ENCODE measurements at regions of chr13 and their contacts with region 1.

Region 1: DNA sequence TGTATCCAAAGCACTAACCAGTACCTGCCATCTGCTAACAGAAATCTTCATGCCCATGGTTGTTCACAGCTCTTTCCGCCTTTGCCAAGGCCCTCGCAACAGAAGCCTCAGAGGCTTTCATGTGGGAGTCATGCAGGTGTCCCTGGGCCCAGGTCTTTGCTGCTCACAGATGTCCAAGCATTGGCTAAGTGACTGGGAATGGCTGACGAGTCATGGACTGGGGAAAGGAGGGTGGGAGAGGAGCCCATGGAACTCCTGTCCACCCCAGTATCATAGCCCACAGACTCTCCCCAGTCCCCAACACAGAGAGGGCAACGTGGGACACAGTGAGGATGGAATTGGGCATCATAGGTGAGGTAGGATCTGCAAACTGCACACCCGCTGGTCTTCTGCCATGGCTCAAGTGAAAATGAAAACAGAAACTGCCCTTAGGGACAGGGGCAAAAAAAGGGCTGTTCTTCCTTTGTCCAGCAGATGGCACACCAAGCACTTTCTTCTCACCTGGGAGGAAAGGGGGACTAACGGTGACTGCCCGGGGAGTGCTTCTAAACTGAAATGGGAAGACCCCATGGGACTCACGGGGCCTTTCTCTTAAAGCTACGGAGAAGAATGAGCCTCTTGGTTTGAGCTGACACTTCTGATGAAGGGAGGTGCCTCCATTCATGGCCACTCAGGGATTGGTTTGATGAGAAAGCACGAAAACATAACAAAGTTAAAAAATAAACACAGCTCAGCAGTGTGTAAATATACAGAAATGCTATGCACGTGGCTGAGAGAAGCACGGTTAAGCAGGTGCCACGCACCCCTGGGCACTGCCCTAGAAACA is 11.1 kb upstream of the DHRS12 start:
- DNase-seq: peak; percentile 65 to 66
- H3K4me3 ChIP-seq: peak overlapping the region in 1 of 3 donors; percentile 5
- H3K27ac ChIP-seq: no peak overlapping the region
- H3K4me1 ChIP-seq: peaks cover 7 to 12% of the 10 kb centered on the region in 2 donors
- H3K27me3 ChIP-seq: no peaks in the 10 kb centered on the region
- CTCF ChIP-seq: peak; percentile 58 to 81 (median 71)
- POLR2A ChIP-seq: no peak

Region 2: GRCh38 chr13:52011632-52012511 is 196.8 kb after region 1 on chr13 and contains the start of gene ALG11:
- intact Hi-C with region 1: loop called (anchors 10 kb)
- DNase-seq: peak; percentile 100
- H3K4me3 ChIP-seq: peak within 1 kb of the TSS; percentile 74 to 97 (median 80)
- H3K27ac ChIP-seq: peak within 1 kb of the TSS in 2 of 3 donors; percentile 34 to 78
- H3K4me1 ChIP-seq: peaks cover 7 to 15% of the 10 kb centered on the region in 2 donors
- H3K27me3 ChIP-seq: no peaks in the 10 kb centered on the region
- CTCF ChIP-seq: peak in 1 of 6 experiments; percentile 2
- POLR2A ChIP-seq: peak in 1 of 2 donors; percentile 46
- total RNA-seq, gene ALG11: 23.4 to 42.1 (median 39.0) TPM